Aorta (tissue), 5 donors: ENCODE measurements at regions of chr21 and their contacts with region 1.

Region 1: GRCh38 chr21:32412162-32413014 is at the start of gene EVA1C:
- DNase-seq: peak; percentile 72 to 90
- ATAC-seq: peak; percentile 82
- H3K4me3 ChIP-seq: peak within 1 kb of the TSS; percentile 67 to 84
- H3K27ac ChIP-seq: peak within 1 kb of the TSS; percentile 99 to 100
- H3K4me1 ChIP-seq: peaks cover 0 to 5% of the 10 kb centered on the region in 2 donors
- H3K27me3 ChIP-seq: no peaks in the 10 kb centered on the region
- total RNA-seq, gene EVA1C: 48.6 to 72.6 TPM

Region 2: DNA sequence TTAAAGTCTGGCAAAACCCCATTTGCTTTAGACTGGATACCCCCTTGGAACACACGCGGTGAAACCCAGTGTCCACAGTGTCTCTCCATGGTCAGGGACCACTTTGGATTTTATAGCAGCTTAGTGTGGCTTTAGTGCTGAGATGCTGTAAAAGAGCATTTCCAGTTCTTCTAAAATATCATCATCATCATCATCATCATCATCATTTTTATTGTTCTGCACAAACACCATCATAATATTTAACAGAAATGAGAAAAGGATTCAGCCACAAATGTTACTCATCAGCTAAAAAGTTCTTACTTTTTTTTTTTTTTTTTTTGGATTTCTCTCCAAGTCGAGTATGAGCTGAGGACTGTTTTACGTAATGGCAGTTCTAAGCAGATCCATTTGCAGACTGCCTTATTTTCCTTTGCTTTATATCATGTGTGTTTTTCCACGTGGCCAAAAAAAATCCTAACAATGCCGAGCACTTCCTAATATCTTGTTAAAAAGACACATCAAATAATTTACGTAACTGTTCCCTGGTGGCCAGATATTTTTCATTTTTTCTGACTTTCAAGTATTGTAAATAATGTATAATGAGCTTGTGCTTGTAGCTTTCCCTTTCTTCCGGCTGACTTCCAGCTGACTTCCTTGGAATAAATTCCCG is 62.9 kb after region 1 on chr21:
- intact Hi-C with region 1: no loop called
- DNase-seq: no peak
- ATAC-seq: peak; percentile 11
- H3K4me3 ChIP-seq: no peak overlapping the region
- H3K27ac ChIP-seq: no peak overlapping the region
- H3K4me1 ChIP-seq: no peaks in the 10 kb centered on the region
- H3K27me3 ChIP-seq: no peaks in the 10 kb centered on the region

Region 3: GRCh38 chr21:32494934-32495703 is 82.7 kb after region 1 on chr21:
- intact Hi-C with region 1: loop called (anchors 5 to 10 kb)
- DNase-seq: peak in 1 of 2 donors; percentile 55
- ATAC-seq: peak; percentile 48
- H3K4me3 ChIP-seq: no peak overlapping the region
- H3K27ac ChIP-seq: peak overlapping the region; percentile 16 to 89
- H3K4me1 ChIP-seq: peaks cover 0 to 6% of the 10 kb centered on the region in 2 donors
- H3K27me3 ChIP-seq: no peaks in the 10 kb centered on the region

Region 4: GRCh38 chr21:32569261-32570230 is 157.2 kb after region 1 on chr21:
- intact Hi-C with region 1: loop called (anchors 5 kb)
- DNase-seq: peak; percentile 84 to 90
- ATAC-seq: peak; percentile 93
- H3K4me3 ChIP-seq: peak overlapping the region; percentile 24 to 67
- H3K27ac ChIP-seq: peak overlapping the region in 1 of 2 donors; percentile 76
- H3K4me1 ChIP-seq: peaks cover 4% of the 10 kb centered on the region in 2 donors
- H3K27me3 ChIP-seq: no peaks in the 10 kb centered on the region